CD8-positive, alpha-beta T cell (primary cell): ENCODE measurements at regions of chr19 and their contacts with region 1.

Region 1: DNA sequence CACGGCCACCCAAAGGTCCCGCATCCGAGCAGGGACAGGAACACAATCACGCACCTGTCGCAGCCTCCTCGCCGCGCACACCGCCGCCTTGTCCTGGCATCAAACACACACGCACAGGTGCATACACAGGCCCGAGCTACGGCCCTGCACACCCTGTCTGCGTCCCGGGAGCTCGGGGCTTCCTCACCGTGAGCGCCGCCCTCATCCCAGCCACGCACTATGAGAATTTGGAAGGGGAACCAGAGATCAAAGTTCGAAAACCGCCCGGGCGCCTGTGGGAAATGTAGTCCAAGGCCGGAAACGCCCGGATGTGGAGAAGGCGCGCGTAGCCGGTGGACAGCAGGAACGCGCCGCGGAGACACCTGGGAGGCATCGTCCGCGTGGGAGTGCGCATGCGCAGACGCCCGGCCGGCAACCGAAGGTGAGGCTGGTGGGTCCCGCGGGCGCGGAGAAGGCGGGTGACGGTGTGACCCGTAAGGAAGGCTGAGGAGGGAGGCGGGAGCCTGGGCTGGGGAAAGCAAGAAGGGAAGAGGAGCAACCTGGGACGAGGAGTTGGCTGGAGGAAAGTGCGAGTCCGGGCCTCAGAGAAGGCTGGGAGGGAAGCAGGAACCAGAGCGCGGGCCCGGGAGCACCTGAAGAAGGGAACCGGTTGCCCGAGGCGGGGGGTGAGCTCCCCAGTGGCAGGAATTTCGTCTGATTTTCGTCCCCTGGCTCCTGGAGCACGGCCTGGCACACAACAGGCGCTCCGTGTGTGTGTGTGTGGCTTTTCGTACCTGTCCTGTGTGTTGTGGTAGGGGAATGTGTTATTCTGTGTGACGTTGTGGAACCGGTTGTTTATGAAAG is at the start of gene ZNF567:
- DNase-seq: peak; percentile 91 to 99 (median 98)
- ATAC-seq: peak; percentile 91
- H3K4me3 ChIP-seq: peak within 1 kb of the TSS; percentile 82 to 87
- H3K4me3 Mint-ChIP-seq: peak within 1 kb of the TSS; percentile 99
- H3K27ac ChIP-seq: peak within 1 kb of the TSS; percentile 71 to 81
- H3K27ac Mint-ChIP-seq: peak within 1 kb of the TSS; percentile 96
- H3K4me1 ChIP-seq: peaks cover 18% of the 10 kb centered on the region
- H3K4me1 Mint-ChIP-seq: peaks cover 35% of the 10 kb centered on the region
- H3K27me3 ChIP-seq: no peaks in the 10 kb centered on the region
- H3K27me3 Mint-ChIP-seq: no peaks in the 10 kb centered on the region
- CTCF ChIP-seq: no peak
- total RNA-seq, gene ZNF567: 10.7 to 11.1 TPM

Region 2: DNA sequence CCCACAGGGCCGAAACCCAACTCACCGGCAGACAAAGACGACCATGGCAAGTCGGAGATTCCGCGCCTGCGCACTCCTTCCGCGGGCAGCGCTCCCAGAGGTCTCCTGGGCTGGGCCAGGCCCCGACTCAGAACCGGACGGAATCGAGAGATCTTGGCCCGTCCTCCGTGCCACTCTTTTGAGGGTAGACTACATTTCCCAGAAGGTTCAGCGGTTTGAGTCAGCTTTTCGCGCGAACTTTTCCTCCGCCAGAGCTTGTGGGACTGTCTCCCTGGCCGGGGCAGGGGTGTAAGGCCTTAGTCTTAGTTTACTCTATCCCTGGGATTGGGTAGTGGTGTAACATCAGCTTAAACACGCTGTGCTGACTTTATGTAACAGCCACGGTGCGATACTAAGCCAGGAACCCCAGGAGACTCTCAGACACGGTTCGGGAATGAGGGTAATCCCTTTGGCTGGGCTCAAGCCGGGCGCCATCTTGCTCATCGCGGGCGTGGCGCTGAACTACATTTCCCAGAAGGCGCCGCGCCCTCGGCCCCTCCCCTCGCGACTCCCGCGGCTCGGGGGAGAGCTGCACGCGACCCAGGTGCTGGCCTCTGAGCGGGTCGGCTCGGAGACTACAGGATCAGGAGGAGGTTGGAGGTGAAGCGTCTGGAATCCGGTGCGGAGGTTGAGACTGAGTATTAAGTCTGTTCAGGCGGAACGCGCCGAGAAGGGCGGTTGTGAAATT is 159.1 kb before region 1 on chr19 and contains the start of gene ZNF260:
- CTCF ChIA-PET with region 1: no interaction called
- POLR2A ChIA-PET with region 1: interaction called, 3 read pairs
- intact Hi-C with region 1: loop called (anchors 1 to 2 kb)
- DNase-seq: peak; percentile 77 to 96 (median 92)
- ATAC-seq: peak; percentile 90
- H3K4me3 ChIP-seq: peak within 1 kb of the TSS; percentile 64 to 85
- H3K4me3 Mint-ChIP-seq: peak within 1 kb of the TSS; percentile 99
- H3K27ac ChIP-seq: peak within 1 kb of the TSS; percentile 52 to 84
- H3K27ac Mint-ChIP-seq: peak within 1 kb of the TSS; percentile 96
- H3K4me1 ChIP-seq: peaks cover 21% of the 10 kb centered on the region
- H3K4me1 Mint-ChIP-seq: peaks cover 28% of the 10 kb centered on the region
- H3K27me3 ChIP-seq: no peaks in the 10 kb centered on the region
- H3K27me3 Mint-ChIP-seq: no peaks in the 10 kb centered on the region
- CTCF ChIP-seq: no peak
- total RNA-seq, gene ZNF260: 2.8 to 4.6 TPM

Region 3: DNA sequence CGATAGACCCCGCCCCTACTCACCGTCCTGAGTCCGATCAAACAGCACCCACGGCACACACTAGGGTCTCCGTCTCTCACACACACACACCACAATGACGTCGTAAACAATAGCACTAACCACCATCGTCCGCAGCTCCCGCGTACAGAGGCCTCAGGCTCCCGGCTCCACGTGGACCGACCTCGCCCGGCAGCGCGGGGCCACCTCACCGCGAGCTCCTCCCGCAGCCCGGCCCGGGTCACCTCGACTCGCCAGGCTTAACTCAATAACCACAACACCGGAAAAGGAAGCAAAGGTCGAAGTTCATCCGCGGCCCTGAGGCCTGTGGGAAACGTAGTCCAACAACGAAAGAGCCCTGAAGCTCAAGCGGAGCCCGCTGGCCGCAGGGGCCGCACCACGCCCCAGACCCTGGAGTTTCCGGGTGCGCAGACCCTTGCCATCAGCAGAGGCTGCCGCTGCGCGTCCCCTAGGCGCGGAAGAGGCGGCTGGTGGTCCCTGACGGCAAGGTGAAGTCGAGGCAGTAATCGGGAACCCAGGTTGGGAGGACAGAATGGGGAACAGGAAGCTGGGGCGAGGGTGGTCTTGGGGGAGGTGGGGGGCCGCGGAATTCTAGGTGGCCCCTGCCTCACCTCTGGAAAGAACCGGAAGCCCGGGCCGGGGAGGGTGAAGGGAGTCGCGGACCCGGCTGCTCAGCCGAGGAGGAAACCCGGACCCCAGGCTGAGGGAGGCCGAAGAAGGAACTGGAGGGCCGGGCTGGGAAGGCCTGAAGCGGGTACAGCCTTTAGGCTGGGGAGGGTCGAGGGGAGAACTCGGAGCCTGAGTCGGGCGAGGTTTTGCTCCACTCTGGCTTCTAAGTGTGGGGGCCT is 114.2 kb before region 1 on chr19 and contains the start of gene ZNF529:
- CTCF ChIA-PET with region 1: no interaction called
- POLR2A ChIA-PET with region 1: no interaction called
- intact Hi-C with region 1: loop called in 1 of 2 experiments (anchors 1 kb)
- DNase-seq: peak; percentile 75 to 98 (median 85)
- ATAC-seq: peak; percentile 93
- H3K4me3 ChIP-seq: peak within 1 kb of the TSS; percentile 87 to 99
- H3K4me3 Mint-ChIP-seq: peak within 1 kb of the TSS; percentile 87
- H3K27ac ChIP-seq: peak within 1 kb of the TSS; percentile 96 to 98
- H3K27ac Mint-ChIP-seq: peak within 1 kb of the TSS; percentile 99
- H3K4me1 ChIP-seq: peaks cover 19% of the 10 kb centered on the region
- H3K4me1 Mint-ChIP-seq: peaks cover 45% of the 10 kb centered on the region
- H3K27me3 ChIP-seq: no peaks in the 10 kb centered on the region
- H3K27me3 Mint-ChIP-seq: no peaks in the 10 kb centered on the region
- CTCF ChIP-seq: no peak
- total RNA-seq, gene ZNF529: 44.0 to 46.4 TPM

Region 4: DNA sequence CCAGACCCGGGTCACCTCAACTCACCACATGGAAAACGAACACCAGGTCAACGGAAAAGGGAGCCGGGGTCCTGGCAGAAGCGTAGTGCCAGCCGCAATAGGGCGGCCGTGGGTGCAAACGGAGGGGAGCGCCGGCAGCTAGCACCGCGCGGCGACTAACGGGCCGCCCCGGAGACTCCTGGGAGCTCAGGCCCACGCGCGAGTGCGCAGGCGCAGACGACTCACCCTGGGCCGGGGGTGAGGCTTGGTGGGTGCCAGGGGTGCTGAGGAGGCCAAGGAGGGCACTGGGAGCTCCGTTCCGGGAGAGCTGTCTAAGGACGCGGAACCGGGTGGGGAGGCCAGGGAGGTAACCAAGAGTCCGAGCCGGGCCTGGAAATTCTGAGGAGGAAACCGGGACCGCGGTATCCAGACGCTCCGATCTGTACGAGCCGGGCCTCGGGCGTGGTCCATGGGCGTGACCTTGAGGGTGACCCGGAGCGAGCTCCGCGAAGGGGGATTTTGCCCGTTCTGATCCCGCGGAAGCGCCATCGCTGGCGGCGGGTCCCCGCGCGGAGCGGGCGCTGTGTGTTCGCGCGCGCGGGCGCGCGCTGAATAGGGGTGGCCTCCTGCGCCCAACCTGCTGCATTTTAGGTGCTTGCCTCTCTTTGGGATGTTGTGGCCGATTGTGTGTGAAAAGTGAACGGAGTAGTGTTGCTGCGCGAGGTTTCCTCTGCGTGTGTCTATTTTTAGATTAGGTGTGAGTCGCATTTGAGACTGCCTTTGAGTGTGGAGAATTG is 82.1 kb before region 1 on chr19 and contains the start of gene ZNF382:
- CTCF ChIA-PET with region 1: no interaction called
- POLR2A ChIA-PET with region 1: interaction called, 12 read pairs
- intact Hi-C with region 1: loop called (anchors 2 to 5 kb)
- DNase-seq: peak; percentile 72 to 91 (median 86)
- ATAC-seq: peak; percentile 65
- H3K4me3 ChIP-seq: peak within 1 kb of the TSS; percentile 89 to 95
- H3K4me3 Mint-ChIP-seq: peak within 1 kb of the TSS; percentile 91
- H3K27ac ChIP-seq: peak within 1 kb of the TSS; percentile 89 to 98
- H3K27ac Mint-ChIP-seq: peak within 1 kb of the TSS; percentile 97
- H3K4me1 ChIP-seq: peaks cover 11% of the 10 kb centered on the region
- H3K4me1 Mint-ChIP-seq: peaks cover 29% of the 10 kb centered on the region
- H3K27me3 ChIP-seq: no peaks in the 10 kb centered on the region
- H3K27me3 Mint-ChIP-seq: no peaks in the 10 kb centered on the region
- CTCF ChIP-seq: no peak
- total RNA-seq, gene ZNF382: 4.6 to 4.7 TPM

Region 5: DNA sequence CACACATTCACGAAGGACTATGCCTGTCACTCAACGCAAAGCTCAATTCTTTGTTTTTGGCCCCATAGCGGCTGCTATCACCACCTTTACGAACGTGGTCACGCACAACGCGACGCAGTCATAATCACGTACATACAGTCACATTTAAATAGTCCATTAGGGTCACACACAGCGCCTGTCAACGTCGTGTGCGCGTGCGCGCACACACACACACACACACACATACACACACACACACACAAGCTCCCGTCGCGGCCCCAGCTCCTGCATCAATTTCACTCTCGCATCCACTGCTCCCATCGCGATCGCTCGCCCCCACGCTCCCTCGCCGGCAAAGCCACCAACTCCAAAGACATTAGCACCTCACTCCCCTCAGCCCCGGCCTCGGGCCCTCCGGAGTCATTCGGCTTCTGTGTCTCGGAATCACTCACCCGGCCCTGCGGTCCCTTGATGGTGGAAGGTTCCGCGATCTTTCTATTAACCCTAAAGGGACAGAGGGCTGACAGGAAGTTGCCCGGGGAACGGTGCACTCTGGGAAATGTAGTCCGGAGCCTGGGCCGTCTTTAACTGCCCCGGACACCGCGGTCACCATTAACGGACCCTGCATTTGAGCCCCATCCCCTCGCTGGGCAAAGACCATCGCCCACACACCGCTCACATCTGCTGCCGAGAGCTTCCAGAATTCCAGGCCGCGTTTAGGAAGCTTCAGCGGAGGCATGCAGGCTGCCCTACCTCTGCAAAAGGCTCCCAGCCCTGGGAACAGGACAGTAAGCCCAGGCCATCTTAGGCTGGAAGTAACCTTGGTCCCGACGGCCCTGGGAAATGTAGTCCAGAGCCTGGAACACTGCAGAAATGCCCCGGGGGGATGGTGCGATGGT is 150.7 kb after region 1 on chr19 and contains the start of gene ZNF790:
- CTCF ChIA-PET with region 1: no interaction called
- POLR2A ChIA-PET with region 1: interaction called, 3 read pairs
- intact Hi-C with region 1: loop called in 1 of 2 experiments (anchors 1 kb)
- DNase-seq: peak; percentile 62 to 92 (median 81)
- ATAC-seq: peak; percentile 87
- H3K4me3 ChIP-seq: peak within 1 kb of the TSS; percentile 86 to 91
- H3K4me3 Mint-ChIP-seq: no peak within 1 kb of the TSS
- H3K27ac ChIP-seq: peak within 1 kb of the TSS; percentile 88 to 97
- H3K27ac Mint-ChIP-seq: no peak within 1 kb of the TSS
- H3K4me1 ChIP-seq: peaks cover 17% of the 10 kb centered on the region
- H3K4me1 Mint-ChIP-seq: peaks cover 21% of the 10 kb centered on the region
- H3K27me3 ChIP-seq: no peaks in the 10 kb centered on the region
- H3K27me3 Mint-ChIP-seq: no peaks in the 10 kb centered on the region
- CTCF ChIP-seq: no peak
- total RNA-seq, gene ZNF790: 2.1 to 3.6 TPM

Region 6: DNA sequence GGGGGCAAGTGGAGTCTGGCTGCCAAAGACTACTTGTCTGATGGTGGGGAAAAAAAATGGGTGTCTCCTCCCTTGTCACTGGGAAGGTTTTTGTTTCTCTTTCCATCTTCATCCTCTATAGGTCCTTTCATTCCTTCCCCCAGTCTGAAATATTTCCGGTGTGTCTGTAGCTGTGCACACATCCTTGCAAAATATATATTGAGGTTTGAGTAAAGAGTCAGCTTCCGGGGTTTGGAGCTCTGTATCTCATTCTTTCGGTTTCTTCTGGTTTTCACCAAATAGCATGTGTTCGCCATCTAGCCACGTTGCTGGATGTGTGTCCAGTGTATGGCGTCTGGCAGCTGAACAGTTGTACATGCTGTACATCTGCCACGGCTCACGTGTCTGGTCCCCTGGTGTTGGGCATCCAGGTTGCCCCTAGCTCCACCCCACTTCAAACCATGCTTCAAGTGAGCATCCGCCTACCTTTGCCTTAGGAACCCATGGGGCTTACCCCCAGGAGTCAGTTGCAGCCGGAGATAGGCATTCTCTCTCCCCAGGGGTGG is 1361.7 kb after region 1 on chr19:
- CTCF ChIA-PET with region 1: no interaction called
- POLR2A ChIA-PET with region 1: no interaction called
- intact Hi-C with region 1: loop called in 1 of 2 experiments (anchors 10 kb)
- DNase-seq: peak in 8 of 9 experiments; percentile 31 to 89 (median 61)
- ATAC-seq: peak; percentile 86
- H3K4me3 ChIP-seq: peak overlapping the region; percentile 29
- H3K4me3 Mint-ChIP-seq: peak overlapping the region; percentile 74
- H3K27ac ChIP-seq: peak overlapping the region; percentile 69 to 90
- H3K27ac Mint-ChIP-seq: peak overlapping the region; percentile 98
- H3K4me1 ChIP-seq: peaks cover 31% of the 10 kb centered on the region
- H3K4me1 Mint-ChIP-seq: peaks cover 53% of the 10 kb centered on the region
- H3K27me3 ChIP-seq: no peaks in the 10 kb centered on the region
- H3K27me3 Mint-ChIP-seq: no peaks in the 10 kb centered on the region
- CTCF ChIP-seq: no peak